ENCODE measurements at regions of chr6 and their contacts with region 1.

Region 1: GRCh38 chr6:72078096-72078495 is 191.7 kb downstream of the RIMS1 start:
- DNase-seq: no peak
- ATAC-seq: no peak

Region 2: DNA sequence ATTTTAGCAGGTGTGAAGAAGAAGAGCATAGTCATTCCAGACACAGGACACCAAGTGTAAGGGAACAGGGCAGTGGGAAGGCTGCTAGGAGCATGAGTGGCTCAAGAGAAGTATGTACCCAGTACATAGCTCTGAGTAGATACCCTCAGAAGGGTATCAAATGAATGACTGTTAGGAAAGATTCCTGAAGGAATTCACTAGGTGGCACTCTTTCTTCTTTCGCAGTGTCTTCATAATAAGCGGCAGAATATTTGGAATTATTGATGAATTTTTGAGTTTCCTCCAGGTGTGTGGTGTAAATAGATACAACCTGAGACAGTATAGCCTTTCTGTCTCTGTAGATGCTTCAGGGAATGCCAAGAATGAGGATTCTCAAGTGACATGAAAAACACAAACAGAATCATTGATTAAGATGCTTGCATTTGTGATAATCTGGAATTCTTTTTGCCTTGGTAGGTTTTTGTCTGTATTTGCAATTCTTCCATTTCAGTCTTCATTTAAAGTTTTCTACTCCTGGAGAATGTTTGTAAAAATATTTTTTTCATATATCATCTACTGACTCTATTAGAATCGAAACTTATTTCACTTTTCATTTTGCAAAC is 456.1 kb before region 1 on chr6:
- intact Hi-C with region 1: loop called (anchors 10 kb)
- DNase-seq: no peak
- ATAC-seq: no peak

Region 3: DNA sequence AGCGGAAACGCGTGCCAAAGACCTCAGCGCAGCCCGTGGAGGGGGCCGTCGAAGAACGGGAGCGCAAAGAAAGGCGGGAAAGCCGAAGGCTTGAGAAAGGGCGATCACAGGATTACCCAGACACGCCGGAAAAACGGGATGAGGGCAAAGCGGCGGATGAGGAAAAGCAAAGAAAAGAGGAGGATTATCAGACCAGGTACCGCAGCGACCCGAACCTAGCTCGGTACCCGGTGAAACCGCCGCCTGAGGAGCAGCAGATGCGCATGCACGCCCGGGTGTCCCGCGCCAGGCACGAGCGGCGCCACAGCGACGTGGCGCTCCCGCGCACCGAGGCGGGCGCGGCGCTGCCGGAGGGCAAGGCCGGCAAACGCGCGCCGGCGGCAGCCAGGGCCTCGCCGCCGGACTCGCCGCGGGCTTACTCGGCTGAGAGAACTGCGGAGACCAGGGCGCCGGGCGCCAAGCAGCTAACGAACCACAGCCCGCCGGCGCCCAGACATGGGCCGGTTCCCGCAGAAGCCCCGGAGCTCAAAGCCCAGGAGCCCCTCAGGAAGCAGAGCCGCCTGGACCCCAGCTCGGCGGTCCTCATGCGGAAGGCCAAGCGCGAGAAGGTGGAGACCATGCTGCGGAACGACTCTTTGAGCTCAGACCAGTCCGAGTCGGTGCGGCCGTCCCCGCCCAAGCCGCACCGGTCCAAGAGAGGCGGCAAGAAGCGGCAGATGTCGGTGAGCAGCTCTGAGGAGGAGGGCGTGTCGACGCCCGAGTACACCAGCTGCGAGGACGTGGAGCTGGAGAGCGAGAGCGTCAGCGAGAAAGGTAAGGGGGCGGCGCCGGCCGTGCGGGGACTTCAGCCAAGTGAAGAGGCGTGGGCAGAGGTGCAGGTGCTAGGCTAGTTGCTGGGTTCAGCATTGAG is 104.5 kb after region 1 on chr6:
- intact Hi-C with region 1: no loop called
- DNase-seq: no peak
- ATAC-seq: no peak